ENCODE measurements at regions of chr2 and their contacts with region 1.

Region 1: GRCh38 chr2:36147670-36148390 is 207.7 kb upstream of the CRIM1 start:
- DNase-seq: no peak
- H3K4me3 ChIP-seq: no peak overlapping the region
- H3K27ac ChIP-seq: no peak overlapping the region
- H3K4me1 ChIP-seq: no peaks in the 10 kb centered on the region
- H3K27me3 ChIP-seq: no peaks in the 10 kb centered on the region
- CTCF ChIP-seq: no peak

Region 2: DNA sequence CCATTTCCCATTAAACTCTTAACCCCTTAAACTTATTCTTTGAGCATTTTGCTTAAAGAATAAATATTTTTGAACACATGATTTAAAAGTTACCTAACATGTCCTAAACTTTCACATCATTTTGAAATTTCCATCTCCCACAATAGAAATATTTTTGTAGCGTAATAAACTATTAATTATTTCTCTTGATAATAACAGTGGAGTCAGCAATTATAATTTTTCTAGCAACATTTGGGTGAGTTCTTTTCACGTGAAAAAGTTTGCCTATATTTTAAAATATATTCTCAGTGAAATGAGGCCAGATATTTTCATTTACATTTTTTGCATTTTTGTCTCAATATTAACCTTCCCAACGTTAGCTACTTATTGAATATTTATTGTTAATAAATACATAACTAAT is 112.7 kb before region 1 on chr2:
- CTCF ChIA-PET with region 1: no interaction called
- POLR2A ChIA-PET with region 1: no interaction called
- intact Hi-C with region 1: no loop called
- DNase-seq: no peak
- H3K4me3 ChIP-seq: no peak overlapping the region
- H3K27ac ChIP-seq: no peak overlapping the region
- H3K4me1 ChIP-seq: no peaks in the 10 kb centered on the region
- H3K27me3 ChIP-seq: no peaks in the 10 kb centered on the region
- CTCF ChIP-seq: no peak

Region 3: DNA sequence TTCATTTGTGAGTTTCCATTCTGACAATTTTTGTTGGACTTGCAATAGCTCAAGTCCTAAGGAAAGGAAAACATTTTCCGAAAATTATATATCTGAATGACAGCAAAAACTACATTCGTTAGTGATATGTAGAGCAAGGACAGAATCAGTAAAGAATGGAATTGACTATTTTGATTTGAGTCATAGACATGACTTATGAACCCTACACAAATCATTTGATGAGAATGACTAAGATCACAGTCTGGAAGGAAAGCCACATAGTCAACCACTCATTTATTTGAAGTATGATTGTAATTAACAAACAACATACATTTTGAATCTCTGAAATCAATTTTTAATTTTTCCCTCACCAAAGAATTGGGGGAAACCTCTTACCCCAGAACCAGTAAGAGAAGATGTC is 23.8 kb before region 1 on chr2:
- CTCF ChIA-PET with region 1: no interaction called
- POLR2A ChIA-PET with region 1: no interaction called
- intact Hi-C with region 1: loop called (anchors 1 kb)
- DNase-seq: no peak
- H3K4me3 ChIP-seq: no peak overlapping the region
- H3K27ac ChIP-seq: no peak overlapping the region
- H3K4me1 ChIP-seq: no peaks in the 10 kb centered on the region
- H3K27me3 ChIP-seq: peaks cover 5% of the 10 kb centered on the region
- CTCF ChIP-seq: no peak

Measured in A673 (cell line).